CD8-positive, alpha-beta T cell (primary cell): ENCODE measurements at regions of chr9 and their contacts with region 1.

Region 1: DNA sequence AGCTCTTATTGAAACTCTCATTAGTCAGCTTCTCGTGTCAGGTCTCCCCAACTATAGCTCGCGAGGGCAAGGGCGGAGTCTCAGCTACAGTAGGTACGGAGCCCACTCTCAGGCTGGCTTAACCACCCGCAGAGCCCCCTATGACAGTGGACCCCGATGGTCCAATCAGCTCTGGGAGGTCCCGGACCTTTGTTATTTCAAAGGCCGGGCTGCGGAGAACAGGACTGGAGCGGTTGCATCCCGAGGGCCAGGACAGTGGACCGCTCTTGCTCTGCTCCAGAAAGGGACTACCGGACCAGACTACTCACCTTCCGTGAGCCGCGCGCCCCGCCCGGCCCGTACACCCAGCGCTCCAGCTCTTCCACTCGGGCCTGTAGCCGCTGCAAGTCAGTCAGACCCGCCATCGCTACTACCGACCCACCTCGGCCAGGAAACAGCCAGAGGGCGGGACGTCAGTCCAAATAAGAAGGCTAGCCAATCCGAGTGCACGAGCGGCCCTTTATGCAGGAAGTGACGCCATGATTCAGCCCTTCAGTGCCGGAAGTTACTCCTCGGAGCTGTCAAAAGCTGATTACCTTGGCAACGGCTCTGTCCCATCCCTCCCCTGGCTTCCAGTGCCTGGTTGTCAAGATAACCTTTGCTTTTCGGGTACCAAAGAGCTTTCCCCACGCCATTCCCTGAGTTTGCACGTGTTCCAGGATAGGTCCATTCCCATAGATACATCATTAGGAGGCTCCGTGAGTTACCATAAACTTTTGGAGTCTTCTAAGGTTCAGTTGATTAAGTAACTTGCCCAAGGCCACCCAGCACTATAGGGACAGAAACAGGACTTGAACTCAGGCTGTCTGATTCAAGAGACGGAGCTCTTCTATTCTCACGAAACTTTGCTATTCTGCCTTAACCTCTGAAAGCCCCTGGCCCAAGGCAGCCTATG is at the start of gene DCTN3:
- DNase-seq: peak; percentile 79 to 97 (median 89)
- ATAC-seq: peak; percentile 98
- H3K4me3 ChIP-seq: peak within 1 kb of the TSS; percentile 85 to 97
- H3K4me3 Mint-ChIP-seq: peak within 1 kb of the TSS; percentile 91
- H3K27ac ChIP-seq: peak within 1 kb of the TSS; percentile 73
- H3K27ac Mint-ChIP-seq: peak within 1 kb of the TSS; percentile 76
- H3K4me1 ChIP-seq: peaks cover 25% of the 10 kb centered on the region
- H3K4me1 Mint-ChIP-seq: peaks cover 34% of the 10 kb centered on the region
- H3K27me3 ChIP-seq: peaks cover 22 to 27% of the 10 kb centered on the region in 2 experiments
- H3K27me3 Mint-ChIP-seq: peaks cover 27% of the 10 kb centered on the region
- CTCF ChIP-seq: no peak
- total RNA-seq, gene DCTN3: 82.8 to 85.3 TPM

Region 2: DNA sequence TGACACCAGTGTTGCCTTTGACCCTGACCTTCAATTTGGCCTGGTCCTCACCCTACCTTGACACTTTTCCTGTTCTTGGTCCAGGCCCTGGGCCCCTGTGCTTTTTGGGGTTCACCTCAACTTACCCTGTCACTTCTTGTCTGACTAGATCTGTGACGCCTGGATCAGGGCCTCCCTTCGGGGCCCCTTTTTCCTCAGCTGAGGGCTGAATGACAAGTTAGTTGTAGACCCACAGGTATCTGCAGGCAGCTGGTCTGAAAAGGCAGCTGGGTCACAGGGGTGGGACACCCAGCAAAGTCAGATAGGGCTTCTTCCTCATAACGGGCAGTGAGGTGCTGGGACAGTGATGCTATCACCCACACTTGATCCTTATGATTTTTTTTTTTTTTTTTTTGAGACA is 233.7 kb before region 1 on chr9:
- CTCF ChIA-PET with region 1: no interaction called
- POLR2A ChIA-PET with region 1: no interaction called
- intact Hi-C with region 1: no loop called
- DNase-seq: peak in 1 of 9 experiments; percentile 41
- ATAC-seq: no peak
- H3K4me3 ChIP-seq: no peak overlapping the region
- H3K4me3 Mint-ChIP-seq: no peak overlapping the region
- H3K27ac ChIP-seq: no peak overlapping the region
- H3K27ac Mint-ChIP-seq: no peak overlapping the region
- H3K4me1 ChIP-seq: no peaks in the 10 kb centered on the region
- H3K4me1 Mint-ChIP-seq: peaks cover 2% of the 10 kb centered on the region
- H3K27me3 ChIP-seq: no peaks in the 10 kb centered on the region
- H3K27me3 Mint-ChIP-seq: no peaks in the 10 kb centered on the region
- CTCF ChIP-seq: no peak

Region 3: DNA sequence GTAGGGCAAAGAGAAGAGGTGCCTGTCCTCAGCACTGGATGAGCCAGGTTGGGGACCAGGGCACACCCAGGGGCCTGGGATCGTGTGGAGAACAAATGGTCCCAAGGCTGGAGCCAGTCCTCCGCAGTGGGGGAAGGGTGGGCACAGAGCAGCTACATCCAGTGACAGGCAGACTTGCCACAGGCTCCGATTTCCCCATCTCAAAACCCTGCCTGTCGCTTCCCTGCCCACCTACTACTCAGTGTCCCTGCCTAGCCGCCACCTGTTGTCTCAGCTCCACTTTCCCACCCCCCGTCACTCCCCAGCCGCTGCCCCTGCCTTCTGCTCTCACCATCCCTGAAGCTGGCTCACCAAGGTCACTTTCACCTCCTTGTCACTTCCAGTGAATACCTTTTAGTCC is 83.6 kb before region 1 on chr9:
- CTCF ChIA-PET with region 1: no interaction called
- POLR2A ChIA-PET with region 1: no interaction called
- intact Hi-C with region 1: no loop called
- DNase-seq: no peak
- ATAC-seq: no peak
- H3K4me3 ChIP-seq: no peak overlapping the region
- H3K4me3 Mint-ChIP-seq: no peak overlapping the region
- H3K27ac ChIP-seq: no peak overlapping the region
- H3K27ac Mint-ChIP-seq: no peak overlapping the region
- H3K4me1 ChIP-seq: no peaks in the 10 kb centered on the region
- H3K4me1 Mint-ChIP-seq: no peaks in the 10 kb centered on the region
- H3K27me3 ChIP-seq: peaks cover 0 to 3% of the 10 kb centered on the region in 2 experiments
- H3K27me3 Mint-ChIP-seq: peaks cover 42% of the 10 kb centered on the region
- CTCF ChIP-seq: no peak

Region 4: DNA sequence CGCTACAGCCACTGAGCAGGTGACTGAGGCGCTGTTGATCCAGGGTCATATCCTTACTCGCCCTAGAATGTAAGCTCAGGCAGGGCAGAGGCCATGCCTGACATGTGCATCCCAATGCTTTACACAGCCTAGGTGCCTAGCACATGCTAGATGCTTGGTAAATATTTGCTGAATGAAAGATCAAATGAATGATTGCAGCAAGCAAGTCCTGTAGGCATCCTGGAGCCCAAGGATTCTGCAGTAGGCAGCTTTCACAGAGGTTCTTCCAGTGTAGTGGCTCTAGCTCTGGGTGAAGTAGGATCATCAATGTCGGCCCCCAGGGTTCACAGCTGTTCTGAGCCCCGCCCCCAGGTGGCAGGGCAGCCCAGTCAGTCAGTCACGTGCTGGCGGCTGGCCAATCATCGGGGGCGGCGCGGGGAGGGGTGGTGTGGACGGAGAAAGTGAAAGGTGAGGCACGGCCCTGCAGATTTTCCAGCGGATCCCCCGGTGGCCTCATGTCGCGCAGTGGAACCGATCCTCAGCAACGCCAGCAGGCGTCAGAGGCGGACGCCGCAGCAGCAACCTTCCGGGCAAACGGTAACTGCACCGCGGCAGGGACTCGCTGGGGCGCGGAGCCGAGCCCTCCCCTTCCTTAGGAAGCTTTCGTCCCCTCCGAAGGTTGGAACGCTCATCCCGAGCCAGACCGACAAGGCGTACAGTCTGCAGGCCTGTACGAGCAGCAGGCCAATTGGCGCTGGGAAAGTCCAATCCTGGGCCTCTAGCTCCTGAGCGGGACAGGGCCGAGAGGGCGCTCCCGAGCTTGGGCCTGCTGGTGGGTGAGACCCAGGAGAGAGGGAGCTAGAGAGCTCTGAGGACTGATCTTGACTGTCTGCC is 26.1 kb after region 1 on chr9 and contains the start of gene GALT:
- CTCF ChIA-PET with region 1: no interaction called
- POLR2A ChIA-PET with region 1: interaction called, 7 read pairs
- intact Hi-C with region 1: loop called in 1 of 2 experiments (anchors 1 kb)
- DNase-seq: peak; percentile 90 to 98 (median 97)
- ATAC-seq: peak; percentile 90
- H3K4me3 ChIP-seq: peak within 1 kb of the TSS; percentile 89 to 99
- H3K4me3 Mint-ChIP-seq: peak within 1 kb of the TSS; percentile 95
- H3K27ac ChIP-seq: peak within 1 kb of the TSS; percentile 69 to 80
- H3K27ac Mint-ChIP-seq: peak within 1 kb of the TSS; percentile 89
- H3K4me1 ChIP-seq: peaks cover 27% of the 10 kb centered on the region
- H3K4me1 Mint-ChIP-seq: peaks cover 31% of the 10 kb centered on the region
- H3K27me3 ChIP-seq: no peaks in the 10 kb centered on the region
- H3K27me3 Mint-ChIP-seq: no peaks in the 10 kb centered on the region
- CTCF ChIP-seq: peak; percentile 58
- total RNA-seq, gene GALT: 64.7 to 68.4 TPM

Region 5: DNA sequence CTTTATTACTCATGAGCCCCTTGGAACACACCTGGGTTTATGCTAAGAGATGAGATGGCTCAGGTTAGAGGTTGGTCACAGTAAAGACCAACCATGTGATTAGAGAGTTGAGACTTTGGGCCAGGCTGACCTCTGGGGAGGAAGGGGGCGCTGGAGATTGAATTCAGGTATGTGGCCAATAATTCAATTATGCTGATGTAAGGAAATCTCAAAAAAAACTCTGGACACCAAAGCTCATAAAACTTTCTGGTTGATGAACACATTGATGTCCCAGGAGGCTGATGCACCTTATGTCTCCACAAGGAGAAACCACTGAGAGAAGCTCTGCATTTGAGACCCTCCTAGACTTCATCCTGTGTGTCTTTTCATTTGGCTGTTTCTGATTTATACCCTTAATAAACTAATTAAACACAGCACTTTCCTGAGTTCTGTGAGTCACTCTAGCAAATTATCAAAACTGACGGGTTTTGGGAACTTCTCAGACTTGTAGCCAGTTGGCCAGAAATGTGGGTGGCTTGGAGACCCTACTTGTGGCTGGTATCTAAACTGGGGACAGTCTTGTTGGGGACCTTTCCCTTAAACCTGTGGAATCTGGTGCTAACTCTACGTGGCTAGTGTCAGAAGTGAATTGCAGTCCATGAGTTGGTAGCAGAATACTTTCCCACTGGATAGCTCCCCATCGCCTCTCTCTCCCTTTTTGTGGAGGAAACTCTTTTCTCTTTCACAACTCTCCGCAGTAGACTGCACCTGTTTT is 49.7 kb after region 1 on chr9:
- CTCF ChIA-PET with region 1: no interaction called
- POLR2A ChIA-PET with region 1: no interaction called
- intact Hi-C with region 1: no loop called
- DNase-seq: no peak
- ATAC-seq: no peak
- H3K4me3 ChIP-seq: no peak overlapping the region
- H3K4me3 Mint-ChIP-seq: no peak overlapping the region
- H3K27ac ChIP-seq: no peak overlapping the region
- H3K27ac Mint-ChIP-seq: no peak overlapping the region
- H3K4me1 ChIP-seq: peaks cover 9% of the 10 kb centered on the region
- H3K4me1 Mint-ChIP-seq: peaks cover 7% of the 10 kb centered on the region
- H3K27me3 ChIP-seq: no peaks in the 10 kb centered on the region
- H3K27me3 Mint-ChIP-seq: no peaks in the 10 kb centered on the region
- CTCF ChIP-seq: no peak

Region 6: DNA sequence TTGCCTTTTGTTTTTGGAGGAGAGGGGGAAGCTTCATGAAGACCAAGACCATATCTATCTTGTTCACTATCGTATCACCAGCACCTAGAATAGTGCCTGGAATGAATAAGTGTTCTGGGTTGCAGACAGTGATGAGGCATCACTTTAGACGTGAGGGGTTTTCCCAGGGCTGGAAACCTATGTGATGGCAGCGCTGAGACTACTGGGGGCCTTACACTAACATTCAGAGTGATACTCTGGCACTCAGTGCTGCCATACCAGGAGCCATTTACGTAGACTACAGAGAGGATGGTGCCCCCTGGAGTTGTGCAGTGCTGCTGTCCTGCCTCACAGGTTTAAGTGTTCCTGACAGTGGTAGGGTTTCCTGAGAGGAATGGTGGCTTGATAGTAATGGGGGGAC is 63.8 kb after region 1 on chr9:
- CTCF ChIA-PET with region 1: no interaction called
- POLR2A ChIA-PET with region 1: no interaction called
- intact Hi-C with region 1: no loop called
- DNase-seq: no peak
- ATAC-seq: no peak
- H3K4me3 ChIP-seq: no peak overlapping the region
- H3K4me3 Mint-ChIP-seq: no peak overlapping the region
- H3K27ac ChIP-seq: no peak overlapping the region
- H3K27ac Mint-ChIP-seq: no peak overlapping the region
- H3K4me1 ChIP-seq: no peaks in the 10 kb centered on the region
- H3K4me1 Mint-ChIP-seq: no peaks in the 10 kb centered on the region
- H3K27me3 ChIP-seq: no peaks in the 10 kb centered on the region
- H3K27me3 Mint-ChIP-seq: peaks cover 5% of the 10 kb centered on the region
- CTCF ChIP-seq: no peak